HEK293 (cell line): ENCODE measurements at regions of chr16 and their contacts with region 1.

Region 1: GRCh38 chr16:86563489-86564345 is 2.9 kb upstream of the FOXC2 start:
- H3K4me3 ChIP-seq: 0 out of 2 replicates have a peak overlapping the region, but pooled peaks have one; percentile 1
- H3K27ac ChIP-seq: no peak overlapping the region
- H3K4me1 ChIP-seq: no peaks in the 10 kb centered on the region
- CTCF ChIP-seq: peak; percentile 98

Region 2: DNA sequence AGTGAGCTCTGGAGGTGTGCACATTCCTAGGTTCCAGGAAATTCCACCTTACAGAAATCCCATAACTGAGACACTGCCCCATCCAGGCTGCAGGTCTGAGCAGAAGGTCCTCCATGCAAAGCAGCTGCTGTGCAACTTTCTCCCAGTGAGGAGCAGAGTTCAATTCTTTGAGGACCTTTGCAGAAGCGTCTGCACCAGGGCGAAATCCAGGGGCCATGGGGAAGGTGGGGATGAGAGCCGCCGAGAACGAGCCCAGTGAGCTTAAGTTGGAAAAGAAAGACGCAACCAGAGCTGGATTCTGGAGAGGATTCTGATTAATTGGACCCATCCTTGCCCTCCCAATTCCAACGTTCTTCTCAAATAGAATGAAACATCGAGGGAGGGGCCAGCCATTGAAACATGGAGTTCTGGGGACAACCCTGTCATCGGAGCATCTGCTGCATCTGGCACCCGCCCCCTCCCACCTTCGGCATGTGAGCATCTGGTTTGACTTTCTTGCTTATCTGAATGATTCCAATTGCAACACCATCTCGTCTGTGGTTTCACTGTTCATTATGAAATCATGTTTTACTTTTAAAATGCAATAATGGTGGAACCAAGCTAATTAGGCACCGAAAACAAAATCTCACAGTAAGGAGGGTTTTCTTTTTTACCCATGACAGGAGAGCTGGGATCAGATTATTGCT is 244.0 kb before region 1 on chr16:
- CTCF ChIA-PET with region 1: no interaction called
- POLR2A ChIA-PET with region 1: no interaction called
- H3K4me3 ChIP-seq: no peak overlapping the region
- H3K27ac ChIP-seq: no peak overlapping the region
- H3K4me1 ChIP-seq: peaks cover 2% of the 10 kb centered on the region; the same call in 1 of the 2 replicates
- CTCF ChIP-seq: no peak

Region 3: DNA sequence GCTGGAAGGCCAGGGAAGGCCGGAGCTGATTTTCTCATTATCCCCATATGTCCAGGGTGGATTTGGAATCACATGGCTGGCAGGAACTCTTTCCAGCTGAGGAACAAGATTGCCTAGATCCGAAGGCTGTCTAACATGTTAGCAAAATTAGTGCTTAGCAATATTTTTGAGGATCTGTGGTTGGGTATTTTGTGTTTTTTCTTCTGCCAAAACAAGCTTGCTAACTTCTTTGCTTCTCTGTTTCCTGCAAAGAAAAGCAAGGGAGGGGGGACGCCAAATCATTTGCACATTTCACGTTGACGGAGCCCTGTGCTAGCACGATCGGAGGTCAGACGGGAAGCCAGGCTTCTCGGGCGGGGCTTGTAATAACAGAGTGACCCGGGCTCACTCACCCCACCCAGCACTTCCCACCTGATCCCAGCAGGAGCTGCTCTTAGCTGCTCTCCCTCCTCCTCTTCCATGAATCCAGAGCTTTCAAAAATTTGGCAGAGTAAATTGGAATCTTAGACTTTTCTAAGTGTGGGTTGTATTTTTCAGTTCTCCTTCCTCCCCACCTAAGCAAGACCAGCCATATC is 86.7 kb before region 1 on chr16:
- CTCF ChIA-PET with region 1: no interaction called
- POLR2A ChIA-PET with region 1: no interaction called
- H3K4me3 ChIP-seq: no peak overlapping the region
- H3K27ac ChIP-seq: no peak overlapping the region
- H3K4me1 ChIP-seq: no peaks in the 10 kb centered on the region
- CTCF ChIP-seq: no peak

Region 4: GRCh38 chr16:87017365-87018012 is 453.8 kb after region 1 on chr16:
- CTCF ChIA-PET with region 1: interaction called, 21 read pairs
- POLR2A ChIA-PET with region 1: no interaction called
- H3K4me3 ChIP-seq: no peak overlapping the region
- H3K27ac ChIP-seq: no peak overlapping the region
- H3K4me1 ChIP-seq: no peaks in the 10 kb centered on the region
- CTCF ChIP-seq: no peak

Region 5: GRCh38 chr16:87076950-87077749 is 513.4 kb after region 1 on chr16:
- CTCF ChIA-PET with region 1: interaction called, 12 read pairs
- POLR2A ChIA-PET with region 1: no interaction called
- H3K4me3 ChIP-seq: no peak overlapping the region
- H3K27ac ChIP-seq: no peak overlapping the region
- H3K4me1 ChIP-seq: no peaks in the 10 kb centered on the region
- CTCF ChIP-seq: peak; percentile 69